Activated T-helper 1 cell treated with anti-CD3 and anti-CD28 coated beads, Interleukin-12 subunit alpha, Interleukin-12 subunit beta, Interleukin-2, Interleukin-4 antibody, amounts not matched to agents 30 ng/mL and 10 ng/mL and 1 ng/mL, durations not matched to agents 14 hours and 24 hours and 36 hours (primary cell): ENCODE measurements at regions of chr7 and their contacts with region 1.

Region 1: DNA sequence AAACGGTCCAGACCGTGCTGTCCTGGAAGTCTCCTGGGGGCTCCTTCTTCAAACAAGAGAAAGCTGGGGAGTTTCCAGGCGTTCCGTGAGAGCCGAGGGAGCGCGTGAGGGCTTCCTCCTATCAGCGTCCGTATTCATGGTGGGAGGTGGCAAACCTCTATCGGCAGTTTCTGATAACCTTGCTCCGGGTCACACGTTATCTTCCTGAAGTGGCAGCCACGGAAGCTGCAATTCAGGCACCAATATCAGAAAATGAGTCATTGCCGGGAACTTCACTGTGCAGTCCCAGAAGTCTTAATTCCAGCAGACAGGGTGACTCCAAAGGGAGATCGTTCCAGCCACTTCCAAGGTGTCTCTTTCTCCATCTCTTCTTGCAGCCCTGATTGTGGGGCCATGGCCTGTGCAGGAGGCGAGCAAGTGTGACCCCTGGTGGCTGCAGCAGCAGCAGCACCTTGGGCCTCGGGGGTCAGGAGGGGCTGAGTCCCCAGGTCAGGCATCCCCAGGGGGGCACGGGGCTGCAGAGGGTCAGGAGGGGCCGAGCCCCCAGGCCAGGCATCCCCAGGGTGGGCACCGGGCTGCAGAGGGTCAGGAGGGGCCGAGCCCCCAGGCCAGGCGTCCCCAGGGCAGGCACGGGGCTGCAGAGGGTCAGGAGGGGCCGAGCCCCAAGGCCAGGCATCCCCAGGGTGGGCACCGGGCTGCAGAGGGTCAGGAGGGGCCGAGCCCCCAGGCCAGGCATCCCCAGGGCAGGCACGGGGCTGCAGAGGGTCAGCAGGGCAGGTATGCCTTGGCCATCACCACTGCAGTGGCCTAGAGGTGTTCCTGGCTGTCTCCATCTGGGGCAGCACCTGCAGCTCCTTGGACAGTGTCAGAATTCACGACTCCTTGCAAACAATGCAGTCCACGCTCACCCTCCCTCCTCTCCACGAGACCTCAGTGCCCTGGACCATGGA is 538.7 kb downstream of the DNAJB6 start:
- DNase-seq: peak; percentile 30
- H3K4me3 Mint-ChIP-seq: peak overlapping the region; percentile 56
- H3K27ac Mint-ChIP-seq: no peak overlapping the region
- H3K4me1 Mint-ChIP-seq: peaks cover 16% of the 10 kb centered on the region
- H3K27me3 Mint-ChIP-seq: no peaks in the 10 kb centered on the region

Region 2: DNA sequence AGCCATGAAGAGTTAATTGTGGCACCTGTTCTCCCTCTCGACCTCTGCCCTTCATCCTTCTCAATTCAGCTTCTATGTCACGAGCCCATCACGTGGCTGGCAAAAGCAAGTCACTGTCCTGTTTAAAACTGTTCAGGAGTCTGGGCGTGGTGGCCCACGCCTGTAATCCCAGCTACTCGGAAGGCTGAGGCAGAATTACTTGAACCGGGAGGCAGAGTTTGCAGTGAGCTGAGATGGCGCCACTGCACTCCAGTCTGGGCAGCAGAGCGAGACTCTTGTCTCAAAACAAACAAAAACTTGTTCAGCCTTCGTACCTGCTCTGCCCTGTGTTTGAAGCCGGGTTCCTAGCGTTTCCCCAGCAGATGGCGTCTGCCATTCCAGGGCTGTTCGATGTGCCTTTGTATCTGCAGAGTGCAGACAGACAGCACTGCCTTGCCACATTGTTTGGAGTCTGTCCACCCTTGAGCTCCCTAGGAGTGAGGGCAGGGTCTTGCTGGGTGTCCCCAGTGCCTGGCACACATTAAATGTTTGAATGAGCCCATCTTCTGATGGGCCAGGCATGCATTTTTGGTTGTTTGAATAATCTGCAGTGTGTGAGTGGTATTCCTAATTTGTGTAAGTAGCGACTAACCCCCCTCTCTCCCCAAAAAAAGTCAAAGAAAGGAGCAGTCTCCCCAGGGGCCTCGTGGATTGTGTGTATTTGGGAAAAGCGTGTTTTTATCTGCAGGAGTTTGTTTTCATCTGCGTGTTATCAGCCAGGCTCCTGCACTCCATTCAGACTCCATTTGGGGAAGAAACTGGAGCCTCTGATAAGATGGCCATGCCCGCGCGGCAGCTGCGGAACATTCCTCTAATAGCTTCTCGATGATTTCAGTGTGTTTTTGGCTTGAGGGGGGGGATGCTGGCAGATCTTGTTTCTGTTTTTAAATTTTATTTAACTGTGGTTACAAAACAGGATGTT is 477.5 kb before region 1 on chr7:
- intact Hi-C with region 1: loop called (anchors 1 kb)
- DNase-seq: no peak
- H3K4me3 Mint-ChIP-seq: no peak overlapping the region
- H3K27ac Mint-ChIP-seq: peak overlapping the region; percentile 45
- H3K4me1 Mint-ChIP-seq: peaks cover 13% of the 10 kb centered on the region
- H3K27me3 Mint-ChIP-seq: no peaks in the 10 kb centered on the region

Region 3: GRCh38 chr7:158282461-158283001 is 407.0 kb after region 1 on chr7:
- intact Hi-C with region 1: no loop called
- DNase-seq: no peak
- H3K4me3 Mint-ChIP-seq: no peak overlapping the region
- H3K27ac Mint-ChIP-seq: no peak overlapping the region
- H3K4me1 Mint-ChIP-seq: no peaks in the 10 kb centered on the region
- H3K27me3 Mint-ChIP-seq: peaks cover 2% of the 10 kb centered on the region